PC-3 (cell line): ENCODE measurements at regions of chr20 and their contacts with region 1.

Region 1: DNA sequence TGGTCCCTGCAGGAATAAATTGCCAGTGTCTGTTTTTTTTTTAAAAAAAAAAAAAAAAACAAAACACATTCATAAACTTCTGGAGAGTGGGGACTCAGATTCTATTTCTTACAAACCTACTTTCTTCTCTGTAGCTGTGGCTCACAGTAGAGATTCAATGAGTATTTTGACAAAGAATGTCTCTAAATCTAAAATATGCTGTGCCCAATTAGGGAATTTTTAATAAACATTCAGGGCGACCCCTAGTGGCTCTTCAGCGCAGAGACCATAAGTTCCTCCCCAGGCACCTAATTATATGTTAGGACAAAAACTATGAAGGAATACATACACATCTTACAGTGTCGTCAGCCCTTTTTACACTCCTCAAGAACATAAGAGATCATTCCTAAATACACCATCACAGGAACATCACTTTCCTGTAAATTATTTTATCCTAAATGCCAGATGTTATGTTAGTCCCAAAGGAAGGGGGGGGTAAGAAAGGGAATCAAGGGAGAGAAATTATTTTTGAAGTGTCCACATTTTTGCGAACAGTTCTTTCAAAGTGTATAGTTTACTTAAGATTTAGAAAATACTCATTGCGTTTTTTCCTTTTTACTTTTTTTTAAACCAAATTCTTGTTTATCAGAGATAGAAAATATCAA is 21.8 kb upstream of the NAA20 start:
- DNase-seq: peak; percentile 77
- ATAC-seq: no peak
- H3K4me3 ChIP-seq: no peak overlapping the region
- H3K27ac ChIP-seq: peak overlapping the region; percentile 96
- H3K4me1 ChIP-seq: peaks cover 53% of the 10 kb centered on the region
- H3K27me3 ChIP-seq: no peaks in the 10 kb centered on the region
- CTCF ChIP-seq: peak; percentile 97

Region 2: GRCh38 chr20:19692685-19693119 is 302.6 kb before region 1 on chr20:
- CTCF ChIA-PET with region 1: interaction called, 4 read pairs
- POLR2A ChIA-PET with region 1: no interaction called
- intact Hi-C with region 1: loop called (anchors 2 kb)
- DNase-seq: peak; percentile 82
- ATAC-seq: peak; percentile 53
- H3K4me3 ChIP-seq: peak overlapping the region; percentile 37
- H3K27ac ChIP-seq: peak overlapping the region; percentile 86
- H3K4me1 ChIP-seq: peaks cover 46% of the 10 kb centered on the region
- H3K27me3 ChIP-seq: no peaks in the 10 kb centered on the region
- CTCF ChIP-seq: peak; percentile 98

Region 3: GRCh38 chr20:19889011-19889953 is 106.1 kb before region 1 on chr20:
- CTCF ChIA-PET with region 1: interaction called, 8 read pairs
- POLR2A ChIA-PET with region 1: interaction called, 4 read pairs
- intact Hi-C with region 1: loop called (anchors 5 kb)
- DNase-seq: peak; percentile 52
- ATAC-seq: peak; percentile 29
- H3K4me3 ChIP-seq: peak overlapping the region; percentile 60
- H3K27ac ChIP-seq: peak overlapping the region; percentile 91
- H3K4me1 ChIP-seq: peaks cover 66% of the 10 kb centered on the region
- H3K27me3 ChIP-seq: no peaks in the 10 kb centered on the region
- CTCF ChIP-seq: no peak

Region 4: GRCh38 chr20:19964289-19965263 is 30.8 kb before region 1 on chr20:
- CTCF ChIA-PET with region 1: no interaction called
- POLR2A ChIA-PET with region 1: no interaction called
- intact Hi-C with region 1: loop called (anchors 1 kb)
- DNase-seq: peak; percentile 83
- ATAC-seq: peak; percentile 98
- H3K4me3 ChIP-seq: no peak overlapping the region
- H3K27ac ChIP-seq: peak overlapping the region; percentile 51
- H3K4me1 ChIP-seq: peaks cover 13% of the 10 kb centered on the region
- H3K27me3 ChIP-seq: no peaks in the 10 kb centered on the region
- CTCF ChIP-seq: no peak

Region 5: GRCh38 chr20:19974626-19975435 is 20.5 kb before region 1 on chr20:
- CTCF ChIA-PET with region 1: interaction called, 4 read pairs
- POLR2A ChIA-PET with region 1: interaction called, 13 read pairs
- intact Hi-C with region 1: loop called (anchors 1 kb)
- DNase-seq: peak; percentile 87
- ATAC-seq: peak; percentile 56
- H3K4me3 ChIP-seq: peak overlapping the region; percentile 87
- H3K27ac ChIP-seq: peak overlapping the region; percentile 93
- H3K4me1 ChIP-seq: peaks cover 42% of the 10 kb centered on the region
- H3K27me3 ChIP-seq: no peaks in the 10 kb centered on the region
- CTCF ChIP-seq: no peak

Region 6: GRCh38 chr20:20024942-20025341 is 29.6 kb after region 1 on chr20:
- CTCF ChIA-PET with region 1: no interaction called
- POLR2A ChIA-PET with region 1: no interaction called
- intact Hi-C with region 1: no loop called
- DNase-seq: no peak
- ATAC-seq: no peak
- H3K4me3 ChIP-seq: no peak overlapping the region
- H3K27ac ChIP-seq: no peak overlapping the region
- H3K4me1 ChIP-seq: peaks cover 7% of the 10 kb centered on the region
- H3K27me3 ChIP-seq: no peaks in the 10 kb centered on the region
- CTCF ChIP-seq: no peak